Common myeloid progenitor, CD34-positive (primary cell): ENCODE measurements at regions of chr2 and their contacts with region 1.

Region 1: DNA sequence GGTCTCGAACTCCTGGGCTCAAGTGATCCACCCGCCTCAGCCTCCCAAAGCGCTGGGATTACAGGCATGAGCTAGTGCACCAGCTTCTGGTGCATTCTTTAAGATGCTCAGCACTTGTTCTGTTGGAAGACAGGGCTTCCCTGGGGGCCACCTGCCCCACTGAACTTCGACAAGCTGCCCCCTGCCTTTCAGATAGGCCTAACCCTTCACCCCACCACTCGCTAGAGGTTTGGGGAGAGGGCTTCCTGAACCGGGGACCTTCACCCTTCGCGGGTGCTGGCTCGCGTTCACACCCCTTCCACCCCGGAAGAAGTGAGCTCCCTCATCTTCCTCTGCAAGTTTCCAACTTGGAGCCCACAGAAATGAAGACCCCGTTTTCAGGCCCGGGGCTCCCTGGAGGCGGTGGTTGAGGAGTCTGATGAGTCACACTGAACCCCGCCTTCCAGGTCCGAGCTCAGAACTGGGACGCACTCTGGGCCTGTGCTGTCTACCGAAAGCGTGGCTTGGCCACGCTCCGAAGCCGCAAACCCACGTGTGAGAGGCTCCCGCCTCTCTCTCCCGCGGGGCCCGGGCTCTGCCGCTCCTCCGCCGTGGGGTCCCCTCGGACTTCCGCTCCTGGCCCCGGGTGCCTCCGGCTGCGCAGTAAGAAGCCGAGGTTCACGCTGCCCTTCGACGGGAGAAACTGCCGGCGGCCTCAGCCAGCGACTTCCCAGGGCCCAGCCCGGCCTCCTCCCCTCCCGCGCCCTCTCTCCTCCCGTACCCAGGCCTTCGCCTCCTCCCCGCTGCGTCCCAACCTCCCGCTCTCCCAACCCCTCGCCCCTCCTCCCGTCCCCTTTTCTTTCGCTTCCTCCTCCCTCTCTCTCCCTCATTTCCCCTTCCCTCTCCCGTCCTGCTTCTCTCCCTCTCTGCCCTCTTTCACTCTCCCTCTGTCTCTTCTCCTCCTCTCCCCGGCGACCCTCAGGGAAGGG is 47.5 kb upstream of the SP3 start:
- DNase-seq: peak; percentile 38 to 67 (median 62)
- H3K4me3 ChIP-seq: peak overlapping the region in 6 of 7 experiments; percentile 10 to 68 (median 46)
- H3K27ac ChIP-seq: no peak overlapping the region
- H3K4me1 ChIP-seq: peaks cover 0 to 16% (median 7%) of the 10 kb centered on the region in 4 experiments
- H3K27me3 ChIP-seq: no peaks in the 10 kb centered on the region

Region 2: DNA sequence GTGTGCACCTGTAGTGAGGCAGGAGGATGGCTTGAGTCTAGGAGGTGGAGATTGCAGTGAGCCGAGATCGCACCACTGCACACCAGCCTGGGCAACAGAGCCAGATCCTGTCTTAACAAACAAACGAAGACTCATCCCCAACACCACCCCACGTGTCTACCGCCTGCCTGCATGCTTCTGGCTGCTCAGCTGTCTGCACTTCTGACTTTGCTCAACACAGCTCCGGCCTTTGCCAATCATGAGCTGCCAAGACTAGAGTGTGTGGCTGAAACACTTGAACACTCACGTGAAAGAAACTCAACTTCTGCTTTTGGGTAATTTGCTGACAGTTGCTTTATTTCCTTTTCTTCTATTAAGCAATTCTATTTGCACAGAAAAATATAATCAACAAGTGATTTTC is 15.4 kb before region 1 on chr2:
- CTCF ChIA-PET with region 1: interaction called, 19 read pairs
- POLR2A ChIA-PET with region 1: no interaction called
- DNase-seq: peak; percentile 85 to 98 (median 95)
- H3K4me3 ChIP-seq: no peak overlapping the region
- H3K27ac ChIP-seq: no peak overlapping the region
- H3K4me1 ChIP-seq: peaks cover 11 to 19% (median 15%) of the 10 kb centered on the region in 4 experiments
- H3K27me3 ChIP-seq: no peaks in the 10 kb centered on the region

Region 3: DNA sequence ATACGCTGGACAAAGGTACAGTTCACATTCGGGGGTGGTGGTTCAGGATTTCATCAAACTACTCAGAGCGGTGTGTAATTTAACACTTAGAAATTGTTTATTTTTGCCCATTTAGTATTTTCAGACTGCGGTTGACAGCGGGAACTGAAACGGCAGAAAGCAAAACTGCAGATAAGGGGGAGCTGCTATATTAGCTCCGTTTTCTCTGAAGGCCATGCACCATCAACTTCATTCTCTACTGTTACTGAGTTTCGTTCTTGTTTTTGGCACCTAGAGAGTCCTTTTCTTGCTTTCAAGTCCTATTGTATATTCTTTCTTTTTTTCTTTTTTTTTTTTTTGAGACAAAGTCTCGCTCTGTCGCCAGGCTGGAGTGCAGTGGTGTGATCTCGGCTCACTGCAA is 74.1 kb after region 1 on chr2:
- CTCF ChIA-PET with region 1: no interaction called
- POLR2A ChIA-PET with region 1: no interaction called
- DNase-seq: no peak
- H3K4me3 ChIP-seq: no peak overlapping the region
- H3K27ac ChIP-seq: no peak overlapping the region
- H3K4me1 ChIP-seq: no peaks in the 10 kb centered on the region
- H3K27me3 ChIP-seq: no peaks in the 10 kb centered on the region